Activated B cell treated with CpG ODN at 0.5 μM for 24 hours (primary cell): ENCODE measurements at regions of chr6 and their contacts with region 1.

Region 1: DNA sequence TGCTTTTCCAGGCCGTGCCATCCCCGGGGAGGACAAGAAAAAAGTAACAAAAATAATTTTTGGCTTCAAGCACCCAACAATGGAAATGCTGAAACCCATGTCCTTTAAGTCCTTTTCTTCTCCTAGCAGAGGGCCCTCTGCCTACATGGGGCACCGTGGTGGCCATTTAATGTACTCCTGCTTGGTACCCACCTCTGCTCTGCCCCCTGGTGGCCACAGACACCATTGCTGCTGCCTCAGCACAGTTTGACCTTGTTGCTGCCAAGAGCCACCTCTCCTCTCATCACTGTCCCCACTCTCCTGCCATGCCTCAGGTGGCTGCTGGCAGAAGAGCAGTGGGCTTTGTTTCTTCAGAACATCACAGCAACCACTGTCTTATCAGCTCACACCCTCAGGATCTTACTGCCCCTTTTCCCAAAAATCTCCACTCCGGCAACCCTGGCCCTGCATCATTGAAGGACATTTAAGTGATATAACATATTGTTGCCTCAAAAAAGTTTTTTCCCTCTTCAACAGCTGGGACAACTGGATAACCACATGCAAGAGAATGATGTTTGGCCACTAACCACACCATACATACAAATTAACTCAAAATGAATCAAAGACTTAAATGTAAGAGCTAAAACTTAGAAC is 12.9 kb upstream of the ARMC2 start:
- DNase-seq: peak; percentile 72
- ATAC-seq: peak; percentile 95
- H3K4me3 Mint-ChIP-seq: no peak overlapping the region
- H3K27ac Mint-ChIP-seq: no peak overlapping the region
- H3K4me1 Mint-ChIP-seq: peaks cover 25% of the 10 kb centered on the region
- H3K27me3 Mint-ChIP-seq: peaks cover 8% of the 10 kb centered on the region
- CTCF ChIP-seq: no peak

Region 2: GRCh38 chr6:107600936-107601335 is 1234.4 kb before region 1 on chr6:
- CTCF ChIA-PET with region 1: no interaction called
- POLR2A ChIA-PET with region 1: no interaction called
- intact Hi-C with region 1: no loop called
- DNase-seq: no peak
- ATAC-seq: no peak
- H3K4me3 Mint-ChIP-seq: no peak overlapping the region
- H3K27ac Mint-ChIP-seq: no peak overlapping the region
- H3K4me1 Mint-ChIP-seq: peaks cover 8% of the 10 kb centered on the region
- H3K27me3 Mint-ChIP-seq: no peaks in the 10 kb centered on the region
- CTCF ChIP-seq: no peak

Region 3: DNA sequence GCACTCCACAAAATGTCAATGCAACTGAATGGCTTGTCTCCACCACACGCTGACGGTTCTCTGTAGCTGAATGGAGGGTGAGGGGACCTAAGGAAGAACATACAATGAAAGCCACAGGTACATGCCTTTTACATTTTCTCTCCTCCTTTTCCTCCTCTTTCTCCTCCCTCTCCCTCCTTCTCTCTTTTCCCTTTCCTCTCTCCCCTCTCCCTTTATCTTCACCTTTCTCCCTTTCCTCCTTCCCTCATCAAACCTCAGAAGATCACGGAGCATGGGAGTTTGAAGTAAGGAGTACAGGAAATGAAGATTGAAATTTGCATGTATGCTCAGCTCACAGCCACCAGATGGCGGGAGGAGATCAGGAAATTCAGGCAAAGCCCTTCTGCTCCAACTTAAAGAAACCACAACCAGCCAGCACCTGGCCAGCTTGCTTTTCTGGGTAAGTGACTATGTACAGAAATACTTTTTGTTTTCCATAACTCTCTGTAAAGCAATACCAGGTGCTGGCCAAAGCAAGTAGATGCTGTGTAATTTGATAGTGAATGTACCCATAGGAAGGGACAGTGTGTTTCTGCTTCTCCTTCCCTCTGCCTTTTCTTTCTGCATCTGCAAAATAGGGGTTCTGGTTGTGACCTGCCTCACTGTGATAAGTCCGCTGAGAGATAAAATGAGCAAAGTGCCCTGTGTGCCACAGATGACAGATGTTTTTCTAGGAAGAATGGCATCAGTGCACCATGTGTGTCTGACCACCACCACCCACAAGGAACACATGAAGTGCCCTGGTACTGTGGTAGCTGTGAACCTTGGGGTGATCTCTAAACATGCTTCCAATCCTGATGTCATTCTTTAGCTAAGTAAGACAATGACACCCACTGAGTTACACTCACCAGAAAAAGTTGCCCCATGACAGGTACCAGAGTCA is 293.2 kb before region 1 on chr6:
- CTCF ChIA-PET with region 1: interaction called, 36 read pairs
- POLR2A ChIA-PET with region 1: no interaction called
- intact Hi-C with region 1: loop called (anchors 1 kb)
- DNase-seq: peak; percentile 34
- ATAC-seq: peak; percentile 84
- H3K4me3 Mint-ChIP-seq: peak overlapping the region; percentile 41
- H3K27ac Mint-ChIP-seq: no peak overlapping the region
- H3K4me1 Mint-ChIP-seq: peaks cover 15% of the 10 kb centered on the region
- H3K27me3 Mint-ChIP-seq: peaks cover 7% of the 10 kb centered on the region
- CTCF ChIP-seq: peak; percentile 39

Region 4: GRCh38 chr6:108782179-108783041 is 52.9 kb before region 1 on chr6:
- CTCF ChIA-PET with region 1: interaction called, 3 read pairs
- POLR2A ChIA-PET with region 1: no interaction called
- intact Hi-C with region 1: loop called (anchors 1 kb)
- DNase-seq: peak; percentile 52
- ATAC-seq: peak; percentile 94
- H3K4me3 Mint-ChIP-seq: peak overlapping the region; percentile 81
- H3K27ac Mint-ChIP-seq: no peak overlapping the region
- H3K4me1 Mint-ChIP-seq: peaks cover 29% of the 10 kb centered on the region
- H3K27me3 Mint-ChIP-seq: peaks cover 17% of the 10 kb centered on the region
- CTCF ChIP-seq: peak; percentile 27

Region 5: GRCh38 chr6:108811490-108811889 is 23.8 kb before region 1 on chr6:
- CTCF ChIA-PET with region 1: no interaction called
- POLR2A ChIA-PET with region 1: no interaction called
- intact Hi-C with region 1: no loop called
- DNase-seq: no peak
- ATAC-seq: no peak
- H3K4me3 Mint-ChIP-seq: no peak overlapping the region
- H3K27ac Mint-ChIP-seq: no peak overlapping the region
- H3K4me1 Mint-ChIP-seq: no peaks in the 10 kb centered on the region
- H3K27me3 Mint-ChIP-seq: peaks cover 8% of the 10 kb centered on the region
- CTCF ChIP-seq: no peak

Region 6: DNA sequence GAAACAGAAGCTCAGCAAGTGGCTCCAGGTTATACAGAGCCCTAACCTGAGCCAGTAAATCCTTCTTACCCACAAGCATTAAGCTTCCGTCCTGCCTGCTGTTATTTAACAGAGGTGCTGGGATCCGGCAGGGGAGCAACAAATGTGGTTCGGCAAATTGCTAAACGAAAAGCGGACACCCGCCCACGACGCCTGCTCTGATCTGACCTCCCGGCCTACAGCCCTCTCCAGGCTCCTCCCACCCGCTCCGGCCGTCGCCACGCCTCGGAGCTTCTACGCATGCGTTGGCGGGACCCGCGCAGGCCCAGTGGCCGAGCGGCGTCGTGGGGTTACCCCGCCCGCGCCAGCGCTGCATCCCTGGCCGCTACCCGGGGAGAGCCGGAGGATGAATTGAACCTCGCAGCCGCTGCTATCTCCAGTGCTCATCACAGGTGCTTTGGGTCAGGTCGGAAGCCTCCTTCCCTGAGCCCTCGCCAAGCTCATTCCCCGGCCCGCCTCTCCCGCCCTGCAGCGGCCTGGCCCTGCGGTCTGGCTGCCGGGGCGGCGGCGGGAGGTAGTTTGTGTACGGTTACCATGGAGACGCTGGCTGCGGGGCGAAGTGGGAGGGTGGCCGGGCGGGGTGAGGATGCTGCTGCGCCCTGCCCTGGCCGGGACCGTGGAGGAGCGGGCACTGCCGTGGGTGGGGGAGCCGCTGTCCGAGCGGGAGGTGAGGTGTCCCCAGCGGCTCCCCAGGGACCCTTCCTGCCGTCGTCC is 13.0 kb after region 1 on chr6 and contains the start of gene ARMC2:
- CTCF ChIA-PET with region 1: interaction called, 3 read pairs
- POLR2A ChIA-PET with region 1: interaction called, 4 read pairs
- intact Hi-C with region 1: loop called (anchors 1 kb)
- DNase-seq: peak; percentile 98
- ATAC-seq: peak; percentile 94
- H3K4me3 Mint-ChIP-seq: peak within 1 kb of the TSS; percentile 86
- H3K27ac Mint-ChIP-seq: peak within 1 kb of the TSS; percentile 83
- H3K4me1 Mint-ChIP-seq: peaks cover 14% of the 10 kb centered on the region
- H3K27me3 Mint-ChIP-seq: peaks cover under 1% of the 10 kb centered on the region
- CTCF ChIP-seq: no peak
- total RNA-seq, gene ARMC2: 3.5 and 4.3 TPM in 2 replicates

Region 7: GRCh38 chr6:108874470-108875160 is 39.3 kb after region 1 on chr6:
- CTCF ChIA-PET with region 1: no interaction called
- POLR2A ChIA-PET with region 1: no interaction called
- intact Hi-C with region 1: loop called (anchors 5 kb)
- DNase-seq: no peak
- ATAC-seq: peak; percentile 81
- H3K4me3 Mint-ChIP-seq: peak overlapping the region; percentile 59
- H3K27ac Mint-ChIP-seq: peak overlapping the region; percentile 51
- H3K4me1 Mint-ChIP-seq: peaks cover 44% of the 10 kb centered on the region
- H3K27me3 Mint-ChIP-seq: no peaks in the 10 kb centered on the region
- CTCF ChIP-seq: no peak

Region 8: DNA sequence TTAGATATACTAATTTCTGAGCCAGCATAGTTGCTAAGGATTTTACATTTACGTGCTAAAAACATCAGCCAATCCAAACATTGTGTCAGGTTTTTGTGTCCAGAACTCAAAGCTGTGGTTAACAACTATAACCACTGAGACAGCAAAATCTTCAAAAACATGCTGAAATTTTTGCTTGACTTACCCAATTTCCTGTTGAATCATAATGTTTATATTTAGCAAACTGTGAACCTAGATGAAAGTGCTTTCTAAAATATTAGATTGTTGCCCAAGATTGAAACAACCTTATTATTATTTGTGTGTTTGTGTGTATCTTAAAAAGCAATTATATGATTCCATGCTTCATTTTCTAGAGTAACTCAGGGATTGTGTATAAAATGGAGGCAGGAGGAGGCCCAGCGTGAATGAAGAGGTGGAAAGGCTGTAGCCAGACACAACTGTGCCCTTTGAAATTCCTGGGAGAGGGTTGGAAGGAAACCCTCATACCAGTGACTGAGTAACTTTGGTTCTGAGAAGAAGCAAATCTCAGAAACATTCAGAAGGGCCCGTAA is 60.9 kb after region 1 on chr6:
- CTCF ChIA-PET with region 1: interaction called, 6 read pairs
- POLR2A ChIA-PET with region 1: no interaction called
- intact Hi-C with region 1: loop called (anchors 1 kb)
- DNase-seq: no peak
- ATAC-seq: no peak
- H3K4me3 Mint-ChIP-seq: no peak overlapping the region
- H3K27ac Mint-ChIP-seq: no peak overlapping the region
- H3K4me1 Mint-ChIP-seq: peaks cover 26% of the 10 kb centered on the region
- H3K27me3 Mint-ChIP-seq: no peaks in the 10 kb centered on the region
- CTCF ChIP-seq: no peak

Region 9: DNA sequence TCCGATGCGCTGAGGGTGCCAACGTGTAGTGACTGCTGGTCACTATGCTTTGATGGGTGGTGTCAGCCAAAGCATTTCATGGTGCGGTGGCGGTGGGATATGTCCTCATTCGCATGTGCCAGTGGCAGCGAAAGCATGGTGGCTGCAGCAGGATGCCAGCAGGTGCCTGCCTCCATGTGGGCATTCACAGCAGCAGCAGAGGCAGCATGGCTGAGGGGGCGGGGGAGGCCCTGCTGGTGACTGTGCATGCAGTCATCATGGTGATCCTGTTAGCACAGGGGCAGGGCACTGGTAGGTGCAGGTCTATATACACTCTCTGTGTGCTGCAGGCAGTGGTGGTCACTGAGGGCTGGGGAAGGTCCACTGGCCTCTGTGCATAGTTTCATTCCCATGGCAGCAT is 877.8 kb after region 1 on chr6:
- CTCF ChIA-PET with region 1: no interaction called
- POLR2A ChIA-PET with region 1: no interaction called
- intact Hi-C with region 1: no loop called
- DNase-seq: no peak
- ATAC-seq: no peak
- H3K4me3 Mint-ChIP-seq: no peak overlapping the region
- H3K27ac Mint-ChIP-seq: no peak overlapping the region
- H3K4me1 Mint-ChIP-seq: peaks cover 28% of the 10 kb centered on the region
- H3K27me3 Mint-ChIP-seq: no peaks in the 10 kb centered on the region
- CTCF ChIP-seq: no peak